Activated CD4-positive, alpha-beta T cell treated with anti-CD3 and anti-CD28 coated beads, Interleukin-2, amount 10 ng/mL, durations not matched to agents 24 days and 14 days (primary cell): ENCODE measurements at regions of chr6 and their contacts with region 1.

Region 1: GRCh38 chr6:17584241-17584803 is 15.8 kb upstream of the FAM8A1 start:
- DNase-seq: peak; percentile 73
- H3K4me3 Mint-ChIP-seq: no peak overlapping the region
- H3K27ac Mint-ChIP-seq: no peak overlapping the region
- H3K4me1 Mint-ChIP-seq: peaks cover 11% of the 10 kb centered on the region
- H3K27me3 Mint-ChIP-seq: peaks cover 20% of the 10 kb centered on the region

Region 2: DNA sequence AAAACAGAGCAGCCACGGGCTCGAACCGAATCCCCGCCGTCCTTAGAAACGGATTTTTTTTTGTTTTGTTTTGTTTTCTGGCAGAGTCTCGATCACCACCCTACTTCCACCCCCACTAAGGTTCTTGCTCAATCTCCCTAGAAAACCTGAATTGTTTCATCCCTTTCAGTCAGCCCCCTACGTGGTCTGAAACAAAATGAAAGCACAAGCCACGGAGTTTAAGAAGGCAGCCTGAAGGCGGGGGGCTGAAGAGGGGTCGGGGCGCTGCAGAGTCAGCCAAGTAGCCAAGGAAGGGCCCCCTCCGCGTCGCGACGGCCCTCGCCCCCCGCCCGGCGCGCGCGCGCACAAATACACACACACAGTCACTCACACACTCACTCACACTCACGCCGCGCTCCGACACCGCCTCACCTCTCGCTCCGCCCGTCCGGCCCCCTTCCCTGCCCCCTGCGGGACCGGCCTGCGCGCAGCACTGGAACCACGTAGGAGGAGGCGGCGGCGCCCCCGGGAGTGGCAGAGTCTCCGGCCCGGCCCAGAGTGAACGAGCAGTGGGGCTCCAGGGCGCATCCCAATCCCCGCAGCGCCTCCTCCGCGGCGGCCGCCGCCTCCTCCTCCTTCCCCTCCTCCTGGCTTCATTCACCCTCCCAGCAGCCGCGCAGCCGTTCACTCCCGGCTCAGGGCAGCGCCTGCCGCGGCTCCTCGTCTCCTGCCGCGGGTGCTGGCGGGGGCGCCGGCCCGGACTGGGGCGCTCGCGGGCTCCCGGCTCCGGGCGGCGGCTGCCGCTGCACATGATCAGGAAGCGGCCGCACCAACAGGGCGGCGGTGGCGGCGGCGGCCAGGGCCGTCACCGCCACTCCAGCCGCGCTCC is 824.4 kb before region 1 on chr6:
- intact Hi-C with region 1: no loop called
- DNase-seq: peak; percentile 93
- H3K4me3 Mint-ChIP-seq: peak overlapping the region; percentile 88
- H3K27ac Mint-ChIP-seq: peak overlapping the region; percentile 94
- H3K4me1 Mint-ChIP-seq: peaks cover 51% of the 10 kb centered on the region
- H3K27me3 Mint-ChIP-seq: no peaks in the 10 kb centered on the region

Region 3: GRCh38 chr6:17392978-17393891 is 191.1 kb before region 1 on chr6 and contains the start of gene CAP2:
- intact Hi-C with region 1: loop called (anchors 10 kb)
- DNase-seq: peak; percentile 38
- H3K4me3 Mint-ChIP-seq: peak within 1 kb of the TSS; percentile 60
- H3K27ac Mint-ChIP-seq: no peak within 1 kb of the TSS
- H3K4me1 Mint-ChIP-seq: peaks cover 3% of the 10 kb centered on the region
- H3K27me3 Mint-ChIP-seq: peaks cover 43% of the 10 kb centered on the region
- total RNA-seq, gene CAP2: not detected in 2 replicates

Region 4: GRCh38 chr6:17423026-17423425 is 161.3 kb before region 1 on chr6:
- intact Hi-C with region 1: no loop called
- DNase-seq: no peak
- H3K4me3 Mint-ChIP-seq: no peak overlapping the region
- H3K27ac Mint-ChIP-seq: no peak overlapping the region
- H3K4me1 Mint-ChIP-seq: no peaks in the 10 kb centered on the region
- H3K27me3 Mint-ChIP-seq: no peaks in the 10 kb centered on the region

Region 5: GRCh38 chr6:17525637-17526036 is 58.7 kb before region 1 on chr6:
- intact Hi-C with region 1: no loop called
- DNase-seq: no peak
- H3K4me3 Mint-ChIP-seq: no peak overlapping the region
- H3K27ac Mint-ChIP-seq: no peak overlapping the region
- H3K4me1 Mint-ChIP-seq: no peaks in the 10 kb centered on the region
- H3K27me3 Mint-ChIP-seq: peaks cover 2% of the 10 kb centered on the region

Region 6: DNA sequence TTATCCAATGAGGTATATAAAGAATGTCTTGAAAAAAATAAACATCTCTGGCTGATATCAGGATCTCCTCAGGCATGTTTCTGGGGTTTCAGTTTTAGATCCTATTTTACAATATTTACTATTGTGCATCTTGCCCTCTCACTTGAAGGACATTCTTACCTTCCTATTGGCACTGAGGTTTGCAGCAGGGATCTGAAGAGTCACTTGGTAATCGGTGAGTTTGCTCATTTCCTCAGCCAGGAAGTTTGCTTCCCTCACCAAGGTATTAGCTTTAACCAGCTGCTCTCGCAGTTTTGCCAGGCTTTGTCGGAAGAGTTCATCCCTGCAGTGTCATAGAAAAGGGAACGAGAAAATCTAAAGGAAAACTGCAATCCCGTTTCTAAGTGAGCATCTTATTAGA is 224.3 kb after region 1 on chr6:
- intact Hi-C with region 1: loop called (anchors 1 kb)
- DNase-seq: no peak
- H3K4me3 Mint-ChIP-seq: no peak overlapping the region
- H3K27ac Mint-ChIP-seq: no peak overlapping the region
- H3K4me1 Mint-ChIP-seq: no peaks in the 10 kb centered on the region
- H3K27me3 Mint-ChIP-seq: peaks cover 16% of the 10 kb centered on the region

Region 7: DNA sequence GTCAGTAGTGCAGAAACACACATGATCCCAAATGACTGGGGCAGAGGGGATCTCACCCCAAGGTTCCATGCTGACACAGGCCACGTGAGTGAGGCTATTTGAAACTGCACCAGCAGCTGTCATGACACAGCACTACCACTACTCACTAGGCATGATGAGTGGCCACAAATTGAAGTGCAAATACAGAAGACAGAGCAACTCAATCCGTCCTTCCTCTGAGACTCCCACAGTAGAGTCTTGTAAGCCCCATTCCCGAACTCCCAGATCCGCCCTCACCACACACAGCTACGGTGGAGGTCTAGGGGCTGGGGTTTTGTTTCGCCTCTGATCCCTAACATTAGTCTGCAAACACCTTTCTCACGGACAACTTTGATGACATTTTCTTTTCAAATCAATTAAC is 235.7 kb after region 1 on chr6:
- intact Hi-C with region 1: loop called (anchors 1 kb)
- DNase-seq: no peak
- H3K4me3 Mint-ChIP-seq: no peak overlapping the region
- H3K27ac Mint-ChIP-seq: no peak overlapping the region
- H3K4me1 Mint-ChIP-seq: no peaks in the 10 kb centered on the region
- H3K27me3 Mint-ChIP-seq: peaks cover 6% of the 10 kb centered on the region